GM10248 (cell line): ENCODE measurements at regions of chr17 and their contacts with region 1.

Region 1: GRCh38 chr17:56851008-56851407 is 17.1 kb downstream of the DGKE start:
- DNase-seq: no peak
- CTCF ChIP-seq: no peak

Region 2: DNA sequence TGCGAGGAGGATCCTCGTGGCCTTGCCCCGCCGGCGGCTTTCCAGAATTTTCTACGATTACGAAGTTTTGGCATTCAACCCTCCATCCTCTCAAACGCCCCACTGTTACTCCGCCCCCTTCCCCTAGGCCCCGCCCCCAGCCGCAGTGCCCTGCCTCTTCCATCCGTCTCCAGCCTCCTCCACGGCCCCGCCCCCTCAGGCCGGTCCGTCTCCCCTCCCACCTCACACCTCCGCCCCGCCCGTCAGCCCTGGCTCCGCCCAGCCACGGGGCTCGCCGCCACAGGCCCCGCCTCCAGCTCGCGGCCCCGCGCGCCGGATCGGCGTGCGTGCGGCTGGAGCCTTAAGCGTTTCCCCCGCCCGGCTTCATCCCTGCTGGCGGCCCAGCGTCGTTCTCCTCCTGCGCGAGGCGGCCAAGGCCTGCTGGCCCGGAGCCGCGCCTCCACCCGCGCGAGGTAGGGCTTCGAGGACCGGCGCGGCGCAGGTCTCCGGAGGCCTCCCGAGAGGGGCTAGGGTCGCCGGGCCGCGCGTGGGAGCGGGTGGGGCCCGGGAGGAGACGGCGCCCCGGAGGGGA is 17.1 kb before region 1 on chr17 and contains the starts of genes C17orf67 and DGKE:
- CTCF ChIA-PET with region 1: interaction called, 15 read pairs
- POLR2A ChIA-PET with region 1: interaction called, 3 read pairs
- DNase-seq: peak; percentile 99
- CTCF ChIP-seq: no peak

Region 3: DNA sequence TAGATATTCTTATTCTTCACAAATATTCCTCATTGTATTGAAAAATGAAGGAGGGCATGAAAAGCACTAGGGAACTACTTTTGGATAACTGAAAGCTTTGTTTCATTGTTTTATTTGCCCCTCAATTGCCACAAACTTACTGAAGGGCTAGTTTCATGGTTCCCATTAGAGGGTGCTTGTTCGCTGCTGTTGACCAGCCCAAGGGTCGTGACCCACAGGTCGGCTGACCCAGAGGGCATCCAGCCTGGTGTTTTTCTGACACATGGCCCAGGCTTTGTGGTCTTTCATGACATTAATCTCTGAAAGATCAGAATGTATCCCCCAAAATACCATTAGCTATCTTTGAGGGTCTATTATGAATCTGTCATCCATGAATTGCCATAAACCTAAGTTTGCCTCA is 13.0 kb after region 1 on chr17:
- CTCF ChIA-PET with region 1: interaction called, 17 read pairs
- POLR2A ChIA-PET with region 1: no interaction called
- DNase-seq: no peak
- CTCF ChIP-seq: no peak